ENCODE measurements at regions of chr18 and their contacts with region 1.

Region 1: GRCh38 chr18:36095936-36096519 is 28.7 kb upstream of the RPRD1A start:
- DNase-seq: peak; percentile 65
- ATAC-seq: peak; percentile 43
- H3K4me3 ChIP-seq: no peak overlapping the region
- H3K4me3 Mint-ChIP-seq: no peak overlapping the region
- H3K27ac ChIP-seq: no peak overlapping the region
- H3K27ac Mint-ChIP-seq: no peak overlapping the region
- H3K4me1 ChIP-seq: no peaks in the 10 kb centered on the region
- H3K4me1 Mint-ChIP-seq: no peaks in the 10 kb centered on the region
- H3K27me3 ChIP-seq: no peaks in the 10 kb centered on the region
- H3K27me3 Mint-ChIP-seq: peaks cover 7% of the 10 kb centered on the region
- CTCF ChIP-seq: peak; percentile 80

Region 2: GRCh38 chr18:35756506-35757117 is 339.4 kb before region 1 on chr18:
- CTCF ChIA-PET with region 1: interaction called, 10 read pairs
- POLR2A ChIA-PET with region 1: no interaction called
- intact Hi-C with region 1: no loop called
- DNase-seq: peak; percentile 75
- ATAC-seq: peak; percentile 63
- H3K4me3 ChIP-seq: no peak overlapping the region
- H3K4me3 Mint-ChIP-seq: no peak overlapping the region
- H3K27ac ChIP-seq: no peak overlapping the region
- H3K27ac Mint-ChIP-seq: no peak overlapping the region
- H3K4me1 ChIP-seq: no peaks in the 10 kb centered on the region
- H3K4me1 Mint-ChIP-seq: peaks cover 2% of the 10 kb centered on the region
- H3K27me3 ChIP-seq: peaks cover 0 to 11% (median 6%) of the 10 kb centered on the region in 4 experiments
- H3K27me3 Mint-ChIP-seq: peaks cover 27% of the 10 kb centered on the region
- CTCF ChIP-seq: peak; percentile 99